Natural killer cell (primary cell): ENCODE measurements at regions of chr5 and their contacts with region 1.

Region 1: DNA sequence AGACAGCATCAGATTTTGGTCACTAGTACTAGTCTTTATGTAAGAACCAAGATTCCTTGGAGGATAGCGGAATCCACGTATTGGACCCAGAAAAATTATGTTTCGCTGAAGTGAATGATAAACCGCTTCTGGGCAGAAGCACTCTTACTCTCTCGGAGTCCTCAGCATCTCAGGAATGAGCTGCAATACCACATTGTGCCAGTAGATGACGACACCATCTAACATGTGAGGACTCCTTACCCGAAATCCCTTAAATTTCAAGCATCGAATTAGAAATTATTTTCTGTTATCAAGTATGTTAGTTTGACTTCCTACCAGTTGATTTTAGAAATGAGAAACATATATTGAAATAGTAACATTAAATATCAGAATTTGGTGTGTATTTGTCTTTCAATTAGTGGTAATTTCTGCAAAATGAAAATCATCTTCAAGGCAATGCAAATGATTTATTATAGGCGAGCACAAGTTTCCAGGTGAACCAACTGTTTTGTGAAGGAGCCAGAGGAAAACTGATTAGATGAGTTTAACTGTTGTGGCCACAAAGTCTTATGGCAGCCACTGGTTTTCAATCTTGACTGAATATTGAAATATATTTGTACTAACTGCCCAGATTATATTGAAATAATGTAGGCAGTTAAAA is 66.0 kb upstream of the CAMK4 start:
- DNase-seq: peak; percentile 24 to 92
- ATAC-seq: peak; percentile 77 to 87 (median 79)
- H3K4me3 ChIP-seq: no peak overlapping the region
- H3K4me3 Mint-ChIP-seq: no peak overlapping the region
- H3K27ac ChIP-seq: no peak overlapping the region
- H3K27ac Mint-ChIP-seq: no peak overlapping the region
- H3K4me1 ChIP-seq: no peaks in the 10 kb centered on the region
- H3K4me1 Mint-ChIP-seq: no peaks in the 10 kb centered on the region
- H3K27me3 ChIP-seq: no peaks in the 10 kb centered on the region
- H3K27me3 Mint-ChIP-seq: no peaks in the 10 kb centered on the region
- CTCF ChIP-seq: peak; percentile 99

Region 2: GRCh38 chr5:111278845-111279504 is 120.8 kb after region 1 on chr5:
- intact Hi-C with region 1: loop called (anchors 10 kb)
- DNase-seq: peak; percentile 25 to 91
- ATAC-seq: peak; percentile 36 to 81 (median 76)
- H3K4me3 ChIP-seq: no peak overlapping the region
- H3K4me3 Mint-ChIP-seq: no peak overlapping the region
- H3K27ac ChIP-seq: no peak overlapping the region
- H3K27ac Mint-ChIP-seq: no peak overlapping the region
- H3K4me1 ChIP-seq: no peaks in the 10 kb centered on the region
- H3K4me1 Mint-ChIP-seq: no peaks in the 10 kb centered on the region
- H3K27me3 ChIP-seq: no peaks in the 10 kb centered on the region
- H3K27me3 Mint-ChIP-seq: peaks cover 2 to 27% of the 10 kb centered on the region in 2 donors
- CTCF ChIP-seq: no peak

Region 3: GRCh38 chr5:111550279-111551020 is 392.2 kb after region 1 on chr5:
- intact Hi-C with region 1: loop called (anchors 5 kb)
- DNase-seq: peak; percentile 57 to 82
- ATAC-seq: peak; percentile 84 to 98 (median 95)
- H3K4me3 ChIP-seq: no peak overlapping the region
- H3K4me3 Mint-ChIP-seq: peak overlapping the region; percentile 19
- H3K27ac ChIP-seq: no peak overlapping the region
- H3K27ac Mint-ChIP-seq: peak overlapping the region in 1 of 2 donors; percentile 59
- H3K4me1 ChIP-seq: peaks cover 3% of the 10 kb centered on the region
- H3K4me1 Mint-ChIP-seq: peaks cover 21 to 24% of the 10 kb centered on the region in 2 donors
- H3K27me3 ChIP-seq: no peaks in the 10 kb centered on the region
- H3K27me3 Mint-ChIP-seq: peaks cover 0 to 5% of the 10 kb centered on the region in 2 donors
- CTCF ChIP-seq: peak; percentile 74